Upper lobe of right lung (tissue), 1 donor: ENCODE measurements at regions of chr5 and their contacts with region 1.

Region 1: DNA sequence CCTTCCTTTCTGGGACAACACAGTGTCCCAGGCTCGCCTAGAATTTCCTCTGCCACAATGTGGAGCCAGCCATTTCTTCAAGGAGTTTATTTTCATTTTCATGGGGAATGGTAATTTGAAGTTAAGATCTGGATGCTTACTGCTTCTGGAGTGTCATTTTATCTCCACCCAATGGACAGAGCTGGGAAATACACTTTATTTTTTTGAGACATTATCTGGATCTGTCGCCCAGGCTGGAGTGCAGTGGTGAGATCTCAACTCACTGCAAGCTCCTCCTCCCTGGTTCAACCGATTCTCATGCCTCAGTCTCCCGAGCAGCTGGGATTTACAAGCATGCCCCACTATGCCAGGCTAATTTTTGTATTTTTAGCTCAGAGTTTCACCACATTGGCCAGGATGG is 12.7 kb upstream of the THG1L start:
- DNase-seq: no peak
- ATAC-seq: peak; percentile 73
- H3K4me3 ChIP-seq: no peak overlapping the region
- H3K27ac ChIP-seq: peak overlapping the region; percentile 13
- H3K4me1 ChIP-seq: peaks cover 7% of the 10 kb centered on the region
- H3K27me3 ChIP-seq: no peaks in the 10 kb centered on the region
- CTCF ChIP-seq: peak; percentile 59

Region 2: DNA sequence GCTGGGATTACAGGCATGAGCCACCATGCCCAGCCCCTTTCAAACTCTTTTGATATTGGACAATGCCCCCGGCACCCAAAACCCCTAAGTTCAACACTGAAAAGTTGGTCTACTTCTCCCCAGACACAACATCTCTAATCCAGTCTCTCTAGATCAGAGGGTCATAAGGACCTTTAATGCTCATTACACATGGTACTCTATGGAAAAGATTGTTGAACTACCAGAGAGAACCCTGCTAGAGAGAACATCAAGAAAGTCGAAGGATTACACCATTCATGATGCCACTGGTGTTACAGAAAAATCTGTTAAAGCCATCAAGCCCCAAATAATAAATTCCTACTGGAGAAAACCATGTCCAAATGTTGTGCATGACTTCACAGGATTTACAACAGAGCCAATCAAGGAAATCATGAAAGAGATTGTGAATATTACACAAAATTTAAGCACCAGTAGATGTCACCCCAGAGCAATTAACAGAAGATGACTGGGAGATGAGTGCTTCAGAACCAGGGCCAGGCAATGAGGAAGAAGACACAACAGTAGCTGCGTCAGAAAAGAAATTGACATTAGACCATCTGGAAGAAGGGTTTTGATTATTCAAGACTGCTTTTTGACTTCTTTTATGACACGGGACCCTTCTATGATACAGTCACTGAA is 286.8 kb before region 1 on chr5:
- intact Hi-C with region 1: loop called (anchors 5 kb)
- DNase-seq: no peak
- ATAC-seq: peak; percentile 86
- H3K4me3 ChIP-seq: no peak overlapping the region
- H3K27ac ChIP-seq: no peak overlapping the region
- H3K4me1 ChIP-seq: no peaks in the 10 kb centered on the region
- H3K27me3 ChIP-seq: no peaks in the 10 kb centered on the region
- CTCF ChIP-seq: peak; percentile 59